ENCODE measurements at regions of chr1 and their contacts with region 1.

Region 1: DNA sequence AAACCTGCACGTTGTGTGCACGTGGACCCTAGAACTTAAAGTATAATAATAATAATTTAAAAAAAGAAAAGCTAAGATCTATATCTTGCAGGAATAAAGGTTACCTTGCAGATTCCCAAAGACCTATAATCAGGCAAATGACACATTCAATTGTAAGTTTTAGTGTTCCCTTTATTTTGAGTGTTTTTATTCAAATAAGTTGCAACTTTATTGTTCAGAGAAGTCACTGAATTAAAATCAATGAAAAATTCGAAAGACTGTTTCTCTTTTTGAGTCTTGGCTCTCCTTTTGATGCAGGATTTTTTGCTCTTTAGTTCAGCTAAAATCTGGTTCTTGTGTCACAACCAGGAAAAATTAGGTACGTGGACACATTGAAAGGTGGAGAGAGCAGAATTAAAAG is 27.8 kb upstream of the TNFSF4 start:
- DNase-seq: no peak
- ATAC-seq: no peak
- H3K4me3 Mint-ChIP-seq: no peak overlapping the region
- H3K27ac Mint-ChIP-seq: no peak overlapping the region
- H3K4me1 Mint-ChIP-seq: peaks cover 6% of the 10 kb centered on the region
- H3K27me3 Mint-ChIP-seq: no peaks in the 10 kb centered on the region
- CTCF ChIP-seq: no peak

Region 2: DNA sequence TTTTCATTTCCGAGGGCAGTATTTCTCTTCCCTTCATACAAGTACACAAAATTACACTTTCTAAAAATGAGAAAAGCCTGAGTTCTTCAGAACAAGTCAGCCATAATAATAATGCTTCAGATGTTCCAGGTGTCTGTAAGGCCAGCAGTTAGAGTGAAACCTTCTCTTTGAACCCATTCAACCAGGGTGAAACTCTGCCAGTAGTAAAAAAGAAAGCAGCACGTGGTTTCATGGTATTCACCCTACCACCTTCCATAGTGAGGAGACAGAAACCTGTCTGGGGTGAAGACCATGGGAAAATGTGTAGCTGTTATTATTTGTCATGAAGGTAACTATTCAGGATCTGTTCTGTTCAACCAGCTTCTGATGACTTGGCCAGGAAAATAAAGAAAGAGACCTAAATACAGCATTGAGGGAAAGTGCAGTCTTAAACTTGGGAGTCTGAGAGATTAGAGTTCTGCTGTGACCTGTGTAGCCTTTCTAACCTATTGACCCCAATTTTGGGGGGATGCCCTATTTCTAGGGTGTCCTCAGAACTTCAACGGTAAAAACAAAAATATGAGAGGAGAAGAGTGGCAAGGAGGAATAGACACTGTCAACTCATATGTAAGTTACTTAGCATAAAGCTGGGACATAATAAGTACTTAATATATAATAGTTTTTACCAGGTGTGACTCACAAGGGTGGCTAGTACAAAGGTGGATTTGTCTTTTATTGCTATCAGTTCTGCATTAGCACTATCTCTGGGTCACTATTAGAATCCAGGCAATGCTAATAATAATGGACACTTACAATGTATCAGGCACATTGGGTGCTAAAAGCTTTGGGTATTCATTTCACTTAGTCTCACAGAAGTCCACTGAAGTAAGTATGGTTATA is 42.3 kb after region 1 on chr1:
- CTCF ChIA-PET with region 1: no interaction called
- POLR2A ChIA-PET with region 1: no interaction called
- intact Hi-C with region 1: loop called (anchors 5 kb)
- DNase-seq: no peak
- ATAC-seq: peak; percentile 14
- H3K4me3 Mint-ChIP-seq: no peak overlapping the region
- H3K27ac Mint-ChIP-seq: no peak overlapping the region
- H3K4me1 Mint-ChIP-seq: peaks cover 9% of the 10 kb centered on the region
- H3K27me3 Mint-ChIP-seq: no peaks in the 10 kb centered on the region
- CTCF ChIP-seq: no peak